ENCODE measurements at regions of chr19 and their contacts with region 1.

Region 1: DNA sequence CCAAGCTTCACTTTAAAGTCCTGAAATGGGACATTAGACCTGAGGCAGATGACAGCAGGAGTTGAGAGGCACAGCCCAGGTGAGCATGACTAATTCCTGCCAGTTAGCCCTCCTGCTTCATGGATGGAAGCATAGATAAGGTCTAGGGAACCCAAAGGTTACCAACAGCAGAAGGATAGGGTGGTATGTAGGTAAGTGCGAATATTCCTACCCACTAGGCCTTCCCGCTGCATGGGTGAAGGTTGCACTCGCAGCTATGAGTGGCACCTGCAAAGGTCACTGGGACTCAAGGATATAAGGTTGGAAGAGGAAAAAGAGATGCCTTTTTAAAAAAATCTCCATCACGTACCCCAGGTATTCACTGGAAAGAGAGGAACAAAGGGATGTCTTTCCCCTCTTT is 12.2 kb upstream of the MLLT1 start:
- DNase-seq: no peak
- H3K4me3 ChIP-seq: no peak overlapping the region
- H3K27ac ChIP-seq: no peak overlapping the region
- H3K4me1 ChIP-seq: no peaks in the 10 kb centered on the region
- H3K27me3 ChIP-seq: peaks cover 2% of the 10 kb centered on the region
- CTCF ChIP-seq: no peak

Region 2: DNA sequence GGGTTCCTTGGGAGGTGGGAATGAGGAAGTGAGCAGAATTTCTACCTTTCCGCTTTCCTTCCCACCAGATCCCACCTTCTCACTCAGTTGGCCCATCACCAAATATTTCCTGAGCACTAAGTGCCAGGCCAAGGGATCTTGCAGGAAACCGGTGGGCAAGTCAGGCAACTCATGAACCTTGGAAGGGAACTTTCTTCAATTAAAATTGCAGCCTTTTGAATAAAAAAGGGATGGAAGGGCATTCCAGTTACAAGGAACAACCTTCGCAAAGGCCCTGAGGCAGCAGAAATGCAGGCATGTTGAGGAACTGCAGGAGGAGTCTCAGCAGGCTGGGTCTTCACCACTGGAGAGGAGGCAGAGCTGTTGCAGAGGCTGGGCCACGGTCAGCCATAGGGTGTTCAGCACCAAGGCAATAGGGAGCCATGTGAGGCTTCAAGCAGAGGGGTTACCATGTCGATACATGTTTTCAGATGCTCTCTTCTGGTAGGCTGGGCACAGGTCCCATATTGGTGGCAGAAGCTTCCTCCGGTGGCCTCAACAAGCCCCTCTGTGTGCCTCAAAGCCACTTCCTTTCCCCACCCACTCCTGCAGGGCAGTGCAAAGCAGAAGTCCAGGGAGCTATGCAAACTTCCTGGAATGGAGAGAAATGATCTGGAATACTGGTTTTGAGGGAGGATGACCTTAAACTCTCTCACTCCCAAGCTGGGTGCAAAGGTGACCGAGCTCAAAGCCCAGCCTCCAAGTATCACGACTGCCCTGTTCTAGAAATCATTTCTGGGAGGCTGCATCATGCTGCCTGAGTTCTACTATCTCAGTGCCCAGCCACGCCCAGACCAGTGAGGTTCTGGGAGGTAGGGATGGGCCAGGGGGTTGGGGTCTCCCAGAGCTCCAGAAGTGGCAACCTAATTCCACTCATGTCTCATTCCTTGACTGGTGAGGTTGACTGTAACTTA is 452.7 kb before region 1 on chr19 and contains the start of gene FUT6:
- CTCF ChIA-PET with region 1: no interaction called
- dilution Hi-C with region 1: loop called (anchors 10 kb)
- in situ Hi-C with region 1: no loop called
- intact Hi-C with region 1: no loop called
- DNase-seq: no peak
- H3K4me3 ChIP-seq: no peak within 1 kb of the TSS
- H3K27ac ChIP-seq: no peak within 1 kb of the TSS
- H3K4me1 ChIP-seq: no peaks in the 10 kb centered on the region
- H3K27me3 ChIP-seq: peaks cover 3% of the 10 kb centered on the region
- CTCF ChIP-seq: no peak
- total RNA-seq, gene FUT6: 0.17 TPM in 1 of 2 donors, not detected in the other

Region 3: DNA sequence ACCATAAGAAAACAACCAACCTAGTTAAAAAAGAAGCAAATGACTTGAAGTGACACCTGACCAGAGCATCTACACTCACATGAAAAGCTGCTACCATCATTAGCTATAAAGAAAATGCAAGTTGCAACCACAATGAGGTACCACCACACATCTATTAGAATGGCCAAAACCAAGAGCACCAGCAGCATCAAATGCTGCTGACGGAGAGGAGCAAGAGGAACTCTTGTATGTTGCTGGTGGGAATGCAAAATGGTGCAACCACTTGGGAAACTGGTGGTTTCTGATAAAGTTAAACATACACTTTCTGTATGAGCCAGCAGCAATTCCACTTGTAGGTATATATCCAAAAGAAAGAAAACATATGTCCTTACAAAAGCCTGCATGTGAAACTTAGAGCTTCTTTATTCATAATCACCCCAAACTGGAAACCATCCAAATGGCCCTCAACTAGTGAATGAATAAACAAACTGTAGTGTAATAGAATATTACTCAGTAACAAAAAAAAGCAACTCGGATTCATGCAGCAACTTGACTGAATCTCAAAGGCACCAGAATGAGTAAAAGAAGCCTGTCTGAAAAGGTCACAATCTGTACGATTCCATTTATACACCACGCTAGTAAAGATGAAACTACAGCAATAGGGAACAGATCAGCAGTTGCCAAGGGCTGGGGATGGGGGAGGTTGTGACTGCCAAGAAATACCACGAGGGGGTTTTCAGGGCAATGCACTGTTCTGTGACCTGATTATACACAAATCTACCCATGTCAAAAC is 253.2 kb before region 1 on chr19:
- CTCF ChIA-PET with region 1: no interaction called
- dilution Hi-C with region 1: loop called (anchors 5 kb)
- in situ Hi-C with region 1: no loop called
- intact Hi-C with region 1: no loop called
- DNase-seq: no peak
- H3K4me3 ChIP-seq: no peak overlapping the region
- H3K27ac ChIP-seq: no peak overlapping the region
- H3K4me1 ChIP-seq: no peaks in the 10 kb centered on the region
- H3K27me3 ChIP-seq: no peaks in the 10 kb centered on the region
- CTCF ChIP-seq: no peak

Region 4: GRCh38 chr19:6103217-6103644 is 188.8 kb before region 1 on chr19:
- CTCF ChIA-PET with region 1: no interaction called
- dilution Hi-C with region 1: no loop called
- in situ Hi-C with region 1: no loop called
- intact Hi-C with region 1: no loop called
- DNase-seq: peak; percentile 99
- H3K4me3 ChIP-seq: peak overlapping the region in 1 of 3 experiments; percentile 12
- H3K27ac ChIP-seq: peak overlapping the region; percentile 99
- H3K4me1 ChIP-seq: peaks cover 40% of the 10 kb centered on the region
- H3K27me3 ChIP-seq: no peaks in the 10 kb centered on the region
- CTCF ChIP-seq: no peak

Region 5: DNA sequence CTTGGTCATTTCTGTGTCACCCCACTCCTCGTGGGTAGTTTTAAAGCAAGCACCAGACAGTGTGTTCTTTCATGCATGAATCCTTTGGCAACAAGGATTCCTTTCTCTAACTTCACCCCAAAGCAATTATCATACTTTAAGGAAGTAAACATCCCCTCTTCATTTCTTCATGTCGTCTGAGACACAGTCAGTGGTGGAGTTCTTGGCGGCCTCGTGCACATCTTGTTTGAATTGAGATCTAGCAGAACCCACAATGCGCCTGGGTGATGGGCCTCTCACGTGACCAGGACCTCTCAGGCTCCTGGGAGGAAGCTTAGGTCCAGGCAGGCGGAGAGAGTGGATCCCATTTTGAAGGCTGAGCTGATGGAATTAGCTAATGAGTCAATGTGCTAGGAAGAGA is 153.9 kb before region 1 on chr19:
- CTCF ChIA-PET with region 1: no interaction called
- dilution Hi-C with region 1: no loop called
- in situ Hi-C with region 1: no loop called
- intact Hi-C with region 1: no loop called
- DNase-seq: no peak
- H3K4me3 ChIP-seq: no peak overlapping the region
- H3K27ac ChIP-seq: no peak overlapping the region
- H3K4me1 ChIP-seq: no peaks in the 10 kb centered on the region
- H3K27me3 ChIP-seq: no peaks in the 10 kb centered on the region
- CTCF ChIP-seq: no peak

Region 6: GRCh38 chr19:6199240-6199983 is 92.6 kb before region 1 on chr19:
- CTCF ChIA-PET with region 1: no interaction called
- dilution Hi-C with region 1: no loop called
- in situ Hi-C with region 1: no loop called
- intact Hi-C with region 1: no loop called
- DNase-seq: peak; percentile 98
- H3K4me3 ChIP-seq: peak overlapping the region; percentile 79 to 100 (median 95)
- H3K27ac ChIP-seq: peak overlapping the region; percentile 2
- H3K4me1 ChIP-seq: peaks cover 5% of the 10 kb centered on the region
- H3K27me3 ChIP-seq: no peaks in the 10 kb centered on the region
- CTCF ChIP-seq: peak; percentile 16 to 36

Region 7: GRCh38 chr19:6238643-6239281 is 53.2 kb before region 1 on chr19:
- CTCF ChIA-PET with region 1: no interaction called
- dilution Hi-C with region 1: loop called (anchors 5 kb)
- in situ Hi-C with region 1: no loop called
- intact Hi-C with region 1: no loop called
- DNase-seq: peak; percentile 37
- H3K4me3 ChIP-seq: no peak overlapping the region
- H3K27ac ChIP-seq: peak overlapping the region; percentile 17
- H3K4me1 ChIP-seq: peaks cover 50% of the 10 kb centered on the region
- H3K27me3 ChIP-seq: no peaks in the 10 kb centered on the region
- CTCF ChIP-seq: no peak

Region 8: GRCh38 chr19:6387372-6387771 is 95.4 kb after region 1 on chr19:
- CTCF ChIA-PET with region 1: no interaction called
- dilution Hi-C with region 1: loop called (anchors 5 kb)
- in situ Hi-C with region 1: no loop called
- intact Hi-C with region 1: no loop called
- DNase-seq: no peak
- H3K4me3 ChIP-seq: no peak overlapping the region
- H3K27ac ChIP-seq: no peak overlapping the region
- H3K4me1 ChIP-seq: peaks cover 3% of the 10 kb centered on the region
- H3K27me3 ChIP-seq: no peaks in the 10 kb centered on the region
- CTCF ChIP-seq: no peak

Region 9: DNA sequence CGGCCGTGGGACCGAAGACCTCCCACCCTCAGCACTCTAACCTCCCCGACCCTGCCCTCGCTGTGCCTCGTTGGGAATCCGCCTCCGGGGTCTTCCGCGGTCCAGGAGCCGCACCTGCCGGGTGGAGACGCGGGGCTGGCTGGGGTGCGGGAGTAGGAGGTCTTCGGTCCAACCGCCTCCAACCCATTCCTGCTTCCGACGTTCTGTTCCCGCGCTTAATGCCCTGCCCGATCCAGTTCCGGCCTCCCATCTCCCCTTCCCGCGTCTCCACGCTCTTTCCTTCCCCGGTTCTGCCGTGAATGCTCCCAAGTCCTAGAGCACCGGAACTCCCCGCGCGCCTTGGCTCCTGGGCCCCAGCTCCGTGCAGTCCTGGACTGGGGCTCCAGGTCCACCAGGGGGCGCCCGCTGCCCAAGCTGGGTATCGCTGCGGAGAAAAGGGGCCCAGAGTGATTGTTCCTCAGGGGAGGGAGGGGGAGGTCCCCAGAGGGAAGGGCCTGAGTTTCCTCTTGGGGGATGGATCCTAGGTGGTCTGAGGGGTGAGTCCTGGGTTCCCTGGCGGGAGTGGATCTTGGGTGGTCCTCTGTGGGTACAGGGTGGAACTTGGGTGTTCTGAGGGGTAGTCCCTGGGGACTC is 224.8 kb after region 1 on chr19:
- CTCF ChIA-PET with region 1: no interaction called
- dilution Hi-C with region 1: no loop called
- in situ Hi-C with region 1: no loop called
- intact Hi-C with region 1: no loop called
- DNase-seq: peak; percentile 78
- H3K4me3 ChIP-seq: peak overlapping the region; percentile 52 to 83 (median 67)
- H3K27ac ChIP-seq: peak overlapping the region; percentile 43
- H3K4me1 ChIP-seq: peaks cover 13% of the 10 kb centered on the region
- H3K27me3 ChIP-seq: no peaks in the 10 kb centered on the region
- CTCF ChIP-seq: peak; percentile 87 to 98

Region 10: GRCh38 chr19:6801485-6802086 is 509.6 kb after region 1 on chr19:
- CTCF ChIA-PET with region 1: no interaction called
- dilution Hi-C with region 1: loop called (anchors 10 kb)
- in situ Hi-C with region 1: no loop called
- intact Hi-C with region 1: no loop called
- DNase-seq: no peak
- H3K4me3 ChIP-seq: no peak overlapping the region
- H3K27ac ChIP-seq: no peak overlapping the region
- H3K4me1 ChIP-seq: peaks cover 5% of the 10 kb centered on the region
- H3K27me3 ChIP-seq: no peaks in the 10 kb centered on the region
- CTCF ChIP-seq: no peak

Measured in mammary epithelial cell (primary cell).